Activated T-helper 1 cell treated with anti-CD3 and anti-CD28 coated beads, Interleukin-12 subunit alpha, Interleukin-12 subunit beta, Interleukin-2, Interleukin-4 antibody, amounts not matched to agents 30 ng/mL and 10 ng/mL and 1 ng/mL, durations not matched to agents 14 hours and 24 hours and 36 hours (primary cell): ENCODE measurements at regions of chr5 and their contacts with region 1.

Region 1: GRCh38 chr5:143679777-143680176 is 132.2 kb upstream of the HMHB1 start:
- DNase-seq: no peak
- H3K4me3 Mint-ChIP-seq: no peak overlapping the region
- H3K27ac Mint-ChIP-seq: no peak overlapping the region
- H3K4me1 Mint-ChIP-seq: peaks cover 18% of the 10 kb centered on the region
- H3K27me3 Mint-ChIP-seq: no peaks in the 10 kb centered on the region

Region 2: DNA sequence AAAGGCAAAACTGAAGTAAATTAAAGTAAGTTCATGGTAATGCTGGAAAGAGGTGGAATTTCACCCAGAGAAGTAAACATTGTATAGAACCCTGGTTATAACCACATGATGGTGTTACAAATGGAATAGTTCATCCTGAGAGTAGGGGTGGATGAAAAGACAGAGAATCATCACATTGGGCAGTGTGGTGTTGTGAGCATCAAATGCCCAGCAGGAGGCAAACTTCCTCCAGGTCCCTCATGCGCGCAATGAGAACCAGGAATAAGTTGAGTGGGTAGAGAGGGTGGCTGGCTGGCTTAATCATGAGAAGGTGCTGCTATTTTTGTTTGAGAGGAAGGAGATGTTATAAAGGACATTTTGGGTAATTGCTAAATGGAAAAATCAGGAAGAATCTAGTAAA is 31.1 kb before region 1 on chr5:
- intact Hi-C with region 1: loop called (anchors 1 kb)
- DNase-seq: no peak
- H3K4me3 Mint-ChIP-seq: no peak overlapping the region
- H3K27ac Mint-ChIP-seq: no peak overlapping the region
- H3K4me1 Mint-ChIP-seq: peaks cover 6% of the 10 kb centered on the region
- H3K27me3 Mint-ChIP-seq: no peaks in the 10 kb centered on the region